ENCODE measurements at regions of chr3 and their contacts with region 1.

Region 1: DNA sequence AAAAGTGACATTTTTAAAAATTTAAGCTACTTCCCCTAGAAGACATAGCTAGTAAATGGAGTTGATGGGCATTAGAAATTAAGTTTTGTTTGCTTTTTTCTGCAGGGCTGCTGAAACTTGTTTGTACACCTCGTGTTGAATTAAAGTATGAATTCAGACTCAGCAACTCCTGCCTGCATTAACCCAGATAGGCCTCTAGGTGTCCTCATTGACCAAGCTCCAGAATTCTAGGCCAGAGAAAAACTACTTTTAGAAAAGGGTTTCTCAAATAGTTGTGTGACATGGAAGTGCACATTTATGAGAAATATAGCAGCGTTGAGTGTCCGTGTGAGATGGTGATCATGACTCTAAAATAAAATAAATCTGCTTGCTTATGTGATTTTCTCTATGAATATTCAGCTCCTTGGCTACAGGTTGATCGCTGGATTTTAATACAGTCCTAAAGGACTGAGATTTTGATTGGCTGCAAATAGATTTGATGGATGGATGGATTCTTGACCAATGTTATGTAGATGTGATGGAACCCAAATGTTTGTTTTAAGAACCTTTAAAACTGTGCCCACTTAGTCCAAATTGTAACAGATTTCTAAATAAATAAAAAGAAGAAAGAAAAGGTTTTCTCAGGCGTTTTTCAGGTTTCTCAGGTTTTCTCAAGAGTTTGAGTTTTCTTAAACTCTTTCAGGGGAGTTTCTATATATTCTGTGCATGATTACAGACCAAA is 39.4 kb upstream of the LMOD3 start:
- DNase-seq: peak; percentile 22
- H3K4me3 ChIP-seq: no peak overlapping the region
- H3K27ac ChIP-seq: no peak overlapping the region
- H3K4me1 ChIP-seq: no peaks in the 10 kb centered on the region
- H3K27me3 ChIP-seq: no peaks in the 10 kb centered on the region
- CTCF ChIP-seq: peak; percentile 84 to 94 (median 89)
- POLR2A ChIP-seq: no peak

Region 2: GRCh38 chr3:69294014-69294775 is 132.4 kb after region 1 on chr3:
- intact Hi-C with region 1: no loop called
- DNase-seq: no peak
- H3K4me3 ChIP-seq: no peak overlapping the region
- H3K27ac ChIP-seq: peak overlapping the region; percentile 54 to 58
- H3K4me1 ChIP-seq: no peaks in the 10 kb centered on the region
- H3K27me3 ChIP-seq: no peaks in the 10 kb centered on the region
- CTCF ChIP-seq: no peak
- POLR2A ChIP-seq: no peak

Region 3: GRCh38 chr3:69410250-69410649 is 248.5 kb after region 1 on chr3:
- intact Hi-C with region 1: loop called (anchors 2 kb)
- DNase-seq: peak; percentile 56
- H3K4me3 ChIP-seq: no peak overlapping the region
- H3K27ac ChIP-seq: no peak overlapping the region
- H3K4me1 ChIP-seq: no peaks in the 10 kb centered on the region
- H3K27me3 ChIP-seq: no peaks in the 10 kb centered on the region
- CTCF ChIP-seq: peak in 3 of 4 experiments; percentile 58 to 75 (median 67)
- POLR2A ChIP-seq: no peak

Region 4: GRCh38 chr3:69425261-69425660 is 263.5 kb after region 1 on chr3:
- intact Hi-C with region 1: loop called (anchors 5 kb)
- DNase-seq: no peak
- H3K4me3 ChIP-seq: no peak overlapping the region
- H3K27ac ChIP-seq: no peak overlapping the region
- H3K4me1 ChIP-seq: no peaks in the 10 kb centered on the region
- H3K27me3 ChIP-seq: no peaks in the 10 kb centered on the region
- CTCF ChIP-seq: peak in 3 of 4 experiments; percentile 23 to 51 (median 42)
- POLR2A ChIP-seq: no peak

Region 5: GRCh38 chr3:69671082-69671952 is 509.6 kb after region 1 on chr3:
- intact Hi-C with region 1: loop called (anchors 5 kb)
- DNase-seq: peak; percentile 29
- H3K4me3 ChIP-seq: no peak overlapping the region
- H3K27ac ChIP-seq: no peak overlapping the region
- H3K4me1 ChIP-seq: no peaks in the 10 kb centered on the region
- H3K27me3 ChIP-seq: no peaks in the 10 kb centered on the region
- CTCF ChIP-seq: peak; percentile 27 to 78 (median 68)
- POLR2A ChIP-seq: no peak